ENCODE measurements at regions of chr20 and their contacts with region 1.

Region 1: GRCh38 chr20:57089691-57090150 is 176.7 kb downstream of the BMP7 start:
- DNase-seq: peak; percentile 66 to 87 (median 83)
- ATAC-seq: peak; percentile 78 to 81
- H3K4me3 ChIP-seq: no peak overlapping the region
- H3K27ac ChIP-seq: no peak overlapping the region
- H3K4me1 ChIP-seq: no peaks in the 10 kb centered on the region
- H3K27me3 ChIP-seq: no peaks in the 10 kb centered on the region

Region 2: DNA sequence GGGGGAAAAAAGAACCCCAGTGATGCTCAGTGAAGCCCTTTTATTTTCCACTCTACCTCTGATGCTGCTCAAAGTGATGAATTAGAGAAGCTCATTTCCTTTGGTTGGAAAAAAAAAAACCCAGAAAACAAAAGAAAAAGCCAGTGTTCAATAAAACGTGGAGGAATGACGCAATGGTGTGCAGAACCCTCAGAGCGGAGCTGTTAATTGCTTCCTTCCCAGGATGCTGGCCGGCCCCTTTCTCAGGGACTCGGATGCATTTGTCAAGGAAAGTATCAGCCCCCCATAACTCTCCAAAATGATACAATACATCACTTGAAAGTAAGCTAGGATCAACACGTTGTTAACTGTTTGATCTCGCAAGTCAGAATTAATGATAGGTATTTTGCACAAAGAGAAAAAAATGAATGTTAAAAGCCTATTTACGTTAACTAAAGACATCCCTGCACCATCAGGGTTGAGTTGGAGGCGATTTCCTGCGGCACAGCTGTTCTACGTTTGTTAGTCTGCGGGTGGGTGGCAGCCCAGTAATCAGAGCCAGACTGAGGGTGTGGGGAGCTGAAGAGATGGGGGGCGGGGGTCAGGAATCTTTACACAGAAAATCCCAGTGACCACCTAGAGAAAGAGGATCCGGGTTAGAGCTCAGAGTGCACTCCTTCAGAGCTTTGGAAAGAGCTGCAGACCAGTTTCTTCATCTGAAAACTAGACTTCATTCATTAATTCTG is 44.4 kb after region 1 on chr20:
- intact Hi-C with region 1: no loop called
- DNase-seq: no peak
- ATAC-seq: no peak
- H3K4me3 ChIP-seq: no peak overlapping the region
- H3K27ac ChIP-seq: no peak overlapping the region
- H3K4me1 ChIP-seq: no peaks in the 10 kb centered on the region
- H3K27me3 ChIP-seq: no peaks in the 10 kb centered on the region

Region 3: GRCh38 chr20:57329608-57330221 is 240.0 kb after region 1 on chr20 and contains the start of gene SPO11:
- intact Hi-C with region 1: loop called in 3 of 4 experiments (anchors 5 kb)
- DNase-seq: no peak
- ATAC-seq: peak; percentile 51 to 55
- H3K4me3 ChIP-seq: no peak within 1 kb of the TSS
- H3K27ac ChIP-seq: no peak within 1 kb of the TSS
- H3K4me1 ChIP-seq: no peaks in the 10 kb centered on the region
- H3K27me3 ChIP-seq: no peaks in the 10 kb centered on the region
- total RNA-seq, gene SPO11: not detected

Region 4: DNA sequence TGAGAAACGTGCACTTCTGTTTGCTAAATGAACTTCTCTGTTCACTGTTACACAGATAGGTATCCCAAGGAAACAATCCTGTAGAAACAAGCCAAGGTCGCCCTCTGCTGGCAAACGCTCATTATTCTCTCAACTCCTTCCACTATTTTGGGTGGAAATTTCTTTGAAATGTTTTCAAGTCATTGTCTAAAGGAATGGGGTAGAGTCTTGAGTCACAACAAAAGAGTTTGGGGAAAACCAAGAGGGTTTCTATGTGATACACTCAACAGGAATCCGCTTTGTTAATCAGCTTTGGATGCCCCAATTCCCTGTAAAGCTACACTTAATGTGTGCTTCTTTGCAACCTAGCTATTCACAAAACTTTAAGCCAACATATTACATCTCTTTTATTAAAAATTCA is 256.8 kb after region 1 on chr20:
- intact Hi-C with region 1: loop called (anchors 2 to 5 kb)
- DNase-seq: peak; percentile 73 to 90 (median 78)
- ATAC-seq: peak; percentile 59 to 64
- H3K4me3 ChIP-seq: no peak overlapping the region
- H3K27ac ChIP-seq: no peak overlapping the region
- H3K4me1 ChIP-seq: no peaks in the 10 kb centered on the region
- H3K27me3 ChIP-seq: no peaks in the 10 kb centered on the region

Region 5: DNA sequence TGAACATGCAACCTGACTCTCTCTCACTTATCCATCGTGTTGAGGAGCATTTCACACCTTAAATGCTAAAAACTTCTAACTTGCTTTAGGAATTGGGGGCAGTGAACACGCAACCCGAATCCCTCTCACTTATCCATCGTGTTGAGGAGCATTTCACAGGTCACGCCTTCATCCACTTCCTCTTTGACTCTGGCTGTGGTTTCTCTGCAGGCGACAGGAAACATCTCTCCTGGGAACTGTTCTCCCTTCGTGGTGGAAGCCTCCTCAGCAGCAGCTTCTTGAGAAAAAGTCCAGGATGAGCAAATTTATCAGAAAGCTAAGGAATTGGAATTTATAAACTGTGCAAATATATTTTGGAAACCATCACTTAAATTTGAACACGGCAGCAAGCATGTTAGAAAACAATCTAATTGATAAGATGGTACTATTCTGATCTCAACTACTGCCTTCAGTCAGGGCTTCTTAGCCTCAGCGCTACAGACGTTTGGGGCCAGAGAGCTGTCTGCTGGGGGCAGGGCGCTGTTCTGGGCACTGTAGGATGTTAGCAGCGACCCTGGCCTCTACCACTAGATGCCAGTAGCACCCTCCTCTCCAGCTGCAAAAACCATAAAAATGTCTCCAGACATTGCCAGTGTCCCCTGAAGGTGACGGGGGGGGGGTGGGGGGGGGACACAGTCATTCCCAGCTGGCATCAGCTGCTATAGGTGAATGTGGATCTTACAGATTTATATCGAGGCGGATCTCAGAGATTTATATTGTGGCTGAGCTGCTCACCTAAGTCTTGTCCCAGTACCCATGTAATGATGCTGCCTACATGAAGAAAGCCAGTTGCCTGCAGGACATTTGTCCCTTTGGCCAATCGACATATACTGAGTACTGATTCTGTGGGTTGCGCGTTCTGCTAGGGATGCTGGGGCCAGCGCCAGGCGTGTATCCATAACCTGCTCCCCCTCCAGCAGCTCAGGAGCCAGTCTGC is 409.0 kb after region 1 on chr20:
- intact Hi-C with region 1: loop called in 1 of 4 experiments (anchors 10 kb)
- DNase-seq: peak in 2 of 3 donors; percentile 56 to 62
- ATAC-seq: peak; percentile 40 to 48
- H3K4me3 ChIP-seq: no peak overlapping the region
- H3K27ac ChIP-seq: no peak overlapping the region
- H3K4me1 ChIP-seq: no peaks in the 10 kb centered on the region
- H3K27me3 ChIP-seq: no peaks in the 10 kb centered on the region